AG04449 (cell line): ENCODE measurements at regions of chr5 and their contacts with region 1.

Region 1: DNA sequence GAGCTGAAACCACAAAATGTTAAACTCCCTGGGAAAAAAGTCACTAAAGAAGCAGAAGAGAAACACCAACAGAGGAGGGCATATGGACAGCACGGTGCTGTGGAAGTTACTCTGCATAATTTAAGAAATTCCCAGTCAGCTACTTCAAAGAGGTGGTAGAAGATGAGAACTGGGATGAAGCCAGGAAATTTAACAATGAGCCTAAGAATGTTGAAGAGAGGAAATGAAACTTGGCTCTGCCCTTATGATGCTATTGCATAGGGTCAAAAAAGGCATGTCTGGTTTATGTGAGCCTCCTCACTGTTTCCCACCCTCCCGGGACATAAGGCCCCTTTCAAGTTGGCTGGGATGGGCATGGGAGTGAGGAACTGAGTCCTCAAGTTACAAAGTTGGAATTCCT is 25.4 kb upstream of the SNX18 start:
- DNase-seq: no peak
- H3K4me3 ChIP-seq: no peak overlapping the region
- CTCF ChIP-seq: no peak

Region 2: GRCh38 chr5:54234304-54234933 is 257.8 kb before region 1 on chr5:
- CTCF ChIA-PET with region 1: interaction called, 57 read pairs
- POLR2A ChIA-PET with region 1: no interaction called
- DNase-seq: peak; percentile 29
- H3K4me3 ChIP-seq: no peak overlapping the region
- CTCF ChIP-seq: peak; percentile 42

Region 3: GRCh38 chr5:54288568-54289217 is 203.5 kb before region 1 on chr5:
- CTCF ChIA-PET with region 1: interaction called, 10 read pairs
- POLR2A ChIA-PET with region 1: no interaction called
- DNase-seq: no peak
- H3K4me3 ChIP-seq: no peak overlapping the region
- CTCF ChIP-seq: no peak

Region 4: DNA sequence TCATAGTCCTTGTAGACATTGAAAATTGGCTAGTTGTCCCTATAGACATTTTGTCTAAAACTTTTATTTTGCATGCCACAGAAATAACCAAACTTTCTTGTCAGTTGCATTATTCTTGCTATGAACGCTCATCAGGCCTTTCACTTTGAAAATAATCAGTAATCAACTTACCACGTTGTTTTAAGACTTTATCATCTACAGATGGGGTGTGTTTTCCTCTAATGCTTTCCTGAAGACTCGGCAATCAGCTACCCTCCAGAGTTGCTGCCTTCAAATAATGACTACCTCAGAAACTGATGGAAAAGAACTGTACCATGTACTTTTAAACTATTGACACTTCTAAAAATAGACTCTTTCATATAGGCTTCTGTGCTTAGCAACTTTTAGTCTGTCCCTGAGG is 70.2 kb before region 1 on chr5:
- CTCF ChIA-PET with region 1: interaction called, 46 read pairs
- POLR2A ChIA-PET with region 1: no interaction called
- DNase-seq: no peak
- H3K4me3 ChIP-seq: no peak overlapping the region
- CTCF ChIP-seq: no peak

Region 5: GRCh38 chr5:54469622-54470021 is 22.6 kb before region 1 on chr5:
- CTCF ChIA-PET with region 1: interaction called, 55 read pairs
- POLR2A ChIA-PET with region 1: no interaction called
- DNase-seq: no peak
- H3K4me3 ChIP-seq: peak overlapping the region; percentile 38
- CTCF ChIP-seq: no peak

Region 6: GRCh38 chr5:54844905-54845566 is 352.9 kb after region 1 on chr5:
- CTCF ChIA-PET with region 1: interaction called, 22 read pairs
- POLR2A ChIA-PET with region 1: no interaction called
- DNase-seq: no peak
- H3K4me3 ChIP-seq: no peak overlapping the region
- CTCF ChIP-seq: no peak

Region 7: DNA sequence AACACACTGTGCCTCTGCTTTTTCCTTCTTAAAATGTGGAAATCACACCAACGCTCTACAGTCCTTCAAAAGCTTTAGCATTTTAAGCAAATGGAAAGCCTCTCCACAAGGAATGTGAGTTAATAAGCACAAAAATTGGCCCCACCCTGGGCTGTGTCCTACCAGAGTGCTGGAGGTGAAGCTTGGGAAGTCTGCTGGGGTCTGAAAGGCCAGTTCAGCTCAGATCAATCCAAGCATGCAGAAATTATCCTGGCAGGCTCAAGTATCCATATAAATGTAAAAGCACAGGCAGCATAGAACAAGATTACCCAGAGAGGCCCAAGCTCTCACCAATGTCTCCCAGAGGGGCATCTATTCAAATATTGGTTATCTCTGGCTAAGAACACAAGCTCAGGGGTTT is 394.7 kb after region 1 on chr5:
- CTCF ChIA-PET with region 1: interaction called, 10 read pairs
- POLR2A ChIA-PET with region 1: no interaction called
- DNase-seq: no peak
- H3K4me3 ChIP-seq: no peak overlapping the region
- CTCF ChIP-seq: no peak